ENCODE measurements at regions of chr14 and their contacts with region 1.

Region 1: GRCh38 chr14:77654001-77654441 is 37.6 kb upstream of the SPTLC2 start:
- DNase-seq: no peak
- H3K4me3 ChIP-seq: no peak overlapping the region
- H3K27ac ChIP-seq: peak overlapping the region in 7 of 59 donors; percentile 6 to 58 (median 36)
- H3K27me3 ChIP-seq: no peaks in the 10 kb centered on the region
- CTCF ChIP-seq: no peak

Region 2: GRCh38 chr14:77531108-77531464 is 122.9 kb before region 1 on chr14:
- intact Hi-C with region 1: no loop called
- DNase-seq: no peak
- H3K4me3 ChIP-seq: no peak overlapping the region
- H3K27ac ChIP-seq: peak overlapping the region in 8 of 59 donors; percentile 1 to 65 (median 42)
- H3K27me3 ChIP-seq: no peaks in the 10 kb centered on the region
- CTCF ChIP-seq: no peak

Region 3: DNA sequence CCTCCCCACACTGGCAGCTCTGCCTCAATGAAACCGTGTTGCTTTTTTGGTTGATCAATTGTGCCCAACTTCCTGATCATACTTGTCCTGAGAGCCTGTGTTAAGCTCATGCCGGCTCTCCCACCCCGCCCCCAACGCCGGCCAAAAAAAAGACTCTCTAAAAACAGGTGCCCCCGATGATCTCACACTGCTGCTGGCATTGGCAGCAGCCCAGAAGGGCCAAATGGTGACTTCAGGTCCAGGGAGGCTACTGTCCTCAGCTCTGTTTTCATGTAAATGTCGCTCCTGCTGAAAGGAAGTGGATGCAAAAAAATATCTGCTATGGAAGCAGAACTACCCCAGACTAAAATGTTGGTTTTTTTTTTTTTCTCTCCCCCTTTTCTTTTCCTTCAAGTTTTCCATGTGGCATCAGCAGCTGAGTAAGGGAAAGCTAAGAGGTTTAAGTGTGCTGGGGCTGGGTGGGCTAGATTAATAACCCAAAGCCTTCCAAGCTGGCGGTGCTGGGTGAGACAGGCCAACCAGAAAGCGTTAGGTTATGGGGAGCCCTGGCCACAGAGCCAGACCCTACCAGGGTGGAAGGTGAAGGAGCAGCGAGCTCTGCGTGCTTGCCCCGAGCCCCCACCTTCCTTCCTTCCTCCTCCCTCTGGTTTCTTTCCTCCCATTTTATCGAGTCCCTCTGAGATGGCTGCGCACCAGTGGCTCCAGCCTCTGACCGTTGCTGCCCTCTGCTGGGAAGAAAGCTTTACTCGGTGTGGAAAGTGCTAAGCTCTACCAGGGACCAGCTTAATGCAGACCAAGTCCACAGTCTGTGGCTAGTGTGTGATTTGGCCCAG is 912.2 kb after region 1 on chr14:
- intact Hi-C with region 1: loop called in 1 of 2 experiments (anchors 10 kb)
- DNase-seq: peak; percentile 73 to 91 (median 87)
- H3K4me3 ChIP-seq: peak overlapping the region; percentile 11 to 68 (median 51)
- H3K27ac ChIP-seq: peak overlapping the region in 30 of 59 donors; percentile 10 to 83 (median 52)
- H3K27me3 ChIP-seq: no peaks in the 10 kb centered on the region
- CTCF ChIP-seq: peak; percentile 55 to 92 (median 85)

Region 4: DNA sequence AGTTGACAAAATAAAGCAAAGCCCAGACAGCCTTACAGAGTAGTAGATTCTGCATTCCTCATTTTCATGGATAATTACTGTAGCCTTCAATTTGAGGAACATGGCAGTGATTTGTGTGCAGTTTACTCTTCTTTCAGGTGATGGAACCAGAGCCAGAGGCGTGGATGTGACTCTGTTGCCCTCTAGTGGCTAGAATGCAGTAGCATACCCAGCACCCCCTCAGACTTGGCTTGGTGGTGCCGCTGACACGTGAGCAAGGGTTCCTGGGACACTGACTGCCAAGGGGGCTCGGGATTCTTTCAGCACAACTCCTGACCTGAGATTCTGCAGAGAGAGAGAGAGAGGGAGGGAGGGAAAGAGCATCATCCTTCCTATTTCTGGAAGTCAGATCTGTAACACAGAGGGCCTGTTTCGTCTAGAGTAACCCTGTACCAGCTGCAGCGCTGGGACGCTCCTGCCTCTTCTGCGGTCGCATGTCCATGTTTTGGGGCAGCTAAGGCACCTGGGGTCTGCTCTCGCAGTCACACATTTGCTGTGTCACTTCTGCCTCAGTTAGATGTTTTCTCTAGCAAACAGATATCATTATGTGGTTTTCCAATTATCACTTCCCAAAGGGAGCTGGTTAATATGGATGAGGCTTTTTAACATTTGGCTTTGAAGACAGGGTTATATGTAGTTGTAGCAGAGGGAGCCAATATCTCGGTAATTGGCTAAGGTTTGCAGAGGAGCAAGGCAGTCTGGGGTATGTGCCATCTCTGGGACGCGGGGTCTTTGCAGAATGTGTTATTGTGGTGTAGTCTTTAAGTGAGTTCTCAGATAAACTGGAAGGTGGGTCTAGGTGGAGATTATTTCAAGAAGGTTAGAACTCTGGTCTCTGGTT is 944.3 kb after region 1 on chr14:
- intact Hi-C with region 1: loop called in 1 of 2 experiments (anchors 10 kb)
- DNase-seq: peak; percentile 30 to 74 (median 64)
- H3K4me3 ChIP-seq: peak overlapping the region in 35 of 59 donors; percentile 1 to 58 (median 30)
- H3K27ac ChIP-seq: peak overlapping the region in 28 of 59 donors; percentile 1 to 68 (median 36)
- H3K27me3 ChIP-seq: no peaks in the 10 kb centered on the region
- CTCF ChIP-seq: peak; percentile 54 to 94 (median 88)

Region 5: DNA sequence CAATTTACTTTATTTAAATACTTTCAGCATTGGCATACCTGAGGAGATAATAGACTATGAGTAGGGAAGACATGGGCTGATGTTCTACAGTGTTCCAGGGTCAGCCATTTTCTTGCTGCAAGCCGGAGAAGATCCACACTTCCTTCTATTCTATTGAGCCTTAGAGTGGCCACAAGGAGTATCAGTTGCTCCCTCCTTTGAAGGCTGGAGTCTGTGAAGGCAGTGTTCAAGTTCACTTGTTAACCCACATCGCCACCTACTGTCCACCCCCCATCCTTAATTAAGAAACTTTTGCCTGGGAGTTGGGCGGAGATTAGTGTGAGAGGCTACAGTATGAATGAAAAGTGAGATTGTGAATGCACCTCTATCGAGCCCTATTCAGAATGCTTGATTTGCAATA is 1182.8 kb after region 1 on chr14:
- intact Hi-C with region 1: loop called in 1 of 2 experiments (anchors 10 kb)
- DNase-seq: peak in 8 of 10 donors; percentile 5 to 75 (median 53)
- H3K4me3 ChIP-seq: no peak overlapping the region
- H3K27ac ChIP-seq: peak overlapping the region in 32 of 59 donors; percentile 2 to 84 (median 64)
- H3K27me3 ChIP-seq: no peaks in the 10 kb centered on the region
- CTCF ChIP-seq: peak; percentile 31 to 79 (median 62)